ENCODE measurements at regions of chr15 and their contacts with region 1.

Region 1: GRCh38 chr15:67863442-67863987 is 23.7 kb upstream of the RNU6-1 start:
- DNase-seq: peak; percentile 58 to 96 (median 76)

Region 2: GRCh38 chr15:68053701-68054627 is 190.4 kb after region 1 on chr15 and contains the start of gene PIAS1:
- intact Hi-C with region 1: loop called (anchors 2 kb)
- DNase-seq: peak; percentile 89 to 99 (median 95)

Region 3: GRCh38 chr15:68154923-68155559 is 291.5 kb after region 1 on chr15:
- intact Hi-C with region 1: loop called (anchors 2 kb)
- DNase-seq: peak in 5 of 10 donors; percentile 18 to 43 (median 36)

Region 4: GRCh38 chr15:68210821-68211655 is 347.5 kb after region 1 on chr15:
- intact Hi-C with region 1: loop called (anchors 2 kb)
- DNase-seq: peak; percentile 77 to 98 (median 86)

Measured in posterior cingulate gyrus (tissue), 11 donors.